CD4-positive, alpha-beta T cell (primary cell): ENCODE measurements at regions of chr11 and their contacts with region 1.

Region 1: DNA sequence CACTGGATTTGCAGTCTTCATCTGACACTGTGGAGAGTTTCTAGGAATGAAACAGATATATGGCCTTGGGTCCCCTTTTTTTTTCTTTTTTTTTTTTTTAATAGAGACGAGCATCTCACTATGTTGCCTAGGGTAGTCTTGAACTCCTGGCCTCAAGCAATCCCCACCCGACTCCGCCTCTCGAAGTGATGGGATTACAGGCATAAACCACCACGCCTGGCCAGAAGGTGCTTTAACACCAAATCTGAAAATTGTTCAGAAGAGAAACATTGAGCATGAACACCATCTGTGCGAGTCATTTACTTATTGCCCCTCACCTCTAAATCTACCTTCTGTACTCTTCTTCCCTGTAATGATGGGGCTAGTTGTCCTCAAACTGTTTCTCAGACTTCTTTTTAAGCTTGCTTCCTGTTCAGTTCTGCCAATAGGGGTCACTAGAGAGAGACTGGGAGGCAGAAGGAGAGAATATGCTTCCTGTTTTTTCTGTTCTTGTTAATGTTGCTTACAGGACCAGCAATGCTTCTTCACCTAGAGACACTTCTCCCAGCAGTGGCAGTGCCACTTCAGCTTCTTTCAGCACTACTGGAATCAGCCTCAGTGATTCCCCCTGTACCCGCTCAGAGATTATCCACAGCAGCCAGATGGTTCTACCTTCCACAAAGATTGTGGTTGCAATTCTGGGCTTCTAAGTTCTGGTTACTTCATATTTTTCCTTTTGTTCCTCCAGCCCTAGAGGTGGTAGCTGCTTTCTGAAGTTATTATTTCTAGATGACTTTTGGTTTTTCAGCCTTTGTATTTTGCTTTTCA is 20.8 kb upstream of the ZBED5 start:
- DNase-seq: peak in 4 of 14 experiments; percentile 44 to 83 (median 78)
- ATAC-seq: peak; percentile 87
- H3K4me3 ChIP-seq: no peak overlapping the region
- H3K4me3 Mint-ChIP-seq: no peak overlapping the region
- H3K27ac ChIP-seq: no peak overlapping the region
- H3K27ac Mint-ChIP-seq: no peak overlapping the region
- H3K4me1 ChIP-seq: peaks cover 7% of the 10 kb centered on the region
- H3K4me1 Mint-ChIP-seq: peaks cover 10% of the 10 kb centered on the region
- H3K27me3 ChIP-seq: no peaks in the 10 kb centered on the region
- H3K27me3 Mint-ChIP-seq: no peaks in the 10 kb centered on the region
- CTCF ChIP-seq: peak; percentile 77

Region 2: DNA sequence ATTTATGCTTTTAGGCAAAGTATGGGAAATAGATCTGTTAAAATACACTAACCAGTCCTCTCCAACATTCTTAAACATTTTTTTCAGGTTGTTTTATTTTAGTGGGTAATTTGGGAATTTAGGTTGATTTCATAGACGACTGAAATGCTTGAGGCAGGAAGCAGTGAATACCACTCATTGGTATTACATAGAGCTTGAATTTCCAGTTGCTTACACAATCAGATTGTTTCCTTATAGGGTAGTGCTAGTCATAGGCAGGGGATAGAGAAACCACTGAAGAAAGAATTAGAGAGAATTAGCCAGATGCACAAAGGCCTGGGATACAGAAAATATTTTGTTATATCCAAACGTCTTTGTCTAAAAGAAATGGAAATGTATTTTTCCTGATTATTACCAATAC is 286.3 kb before region 1 on chr11:
- CTCF ChIA-PET with region 1: no interaction called
- POLR2A ChIA-PET with region 1: no interaction called
- intact Hi-C with region 1: no loop called
- DNase-seq: peak in 2 of 14 experiments; percentile 19 to 26
- ATAC-seq: no peak
- H3K4me3 ChIP-seq: no peak overlapping the region
- H3K4me3 Mint-ChIP-seq: no peak overlapping the region
- H3K27ac ChIP-seq: no peak overlapping the region
- H3K27ac Mint-ChIP-seq: no peak overlapping the region
- H3K4me1 ChIP-seq: no peaks in the 10 kb centered on the region
- H3K4me1 Mint-ChIP-seq: no peaks in the 10 kb centered on the region
- H3K27me3 ChIP-seq: no peaks in the 10 kb centered on the region
- H3K27me3 Mint-ChIP-seq: peaks cover 5% of the 10 kb centered on the region
- CTCF ChIP-seq: no peak

Region 3: DNA sequence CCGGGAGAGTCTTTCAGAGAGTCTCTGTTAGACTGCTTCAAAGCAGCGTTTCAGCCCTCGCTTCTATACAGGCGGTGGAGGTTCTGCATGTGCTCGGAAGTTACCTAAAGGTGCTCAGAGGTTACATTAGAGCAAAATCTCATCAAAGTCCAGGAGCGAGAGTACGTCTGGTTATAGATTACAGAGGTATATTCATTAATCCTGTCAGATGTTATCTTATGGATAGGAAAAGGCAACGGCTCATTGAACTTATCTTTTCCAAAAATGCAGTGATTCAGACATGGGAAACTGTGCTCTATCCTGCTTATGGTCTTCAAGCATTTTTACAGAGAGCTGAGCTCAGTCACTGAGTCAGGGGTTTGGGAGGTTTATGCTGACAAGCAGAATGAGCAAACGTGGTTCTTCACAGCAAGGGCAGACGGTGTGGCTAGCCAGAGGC is 11.7 kb before region 1 on chr11:
- CTCF ChIA-PET with region 1: interaction called, 11 read pairs
- POLR2A ChIA-PET with region 1: no interaction called
- intact Hi-C with region 1: no loop called
- DNase-seq: no peak
- ATAC-seq: no peak
- H3K4me3 ChIP-seq: no peak overlapping the region
- H3K4me3 Mint-ChIP-seq: no peak overlapping the region
- H3K27ac ChIP-seq: no peak overlapping the region
- H3K27ac Mint-ChIP-seq: no peak overlapping the region
- H3K4me1 ChIP-seq: no peaks in the 10 kb centered on the region
- H3K4me1 Mint-ChIP-seq: peaks cover 19% of the 10 kb centered on the region
- H3K27me3 ChIP-seq: no peaks in the 10 kb centered on the region
- H3K27me3 Mint-ChIP-seq: no peaks in the 10 kb centered on the region
- CTCF ChIP-seq: no peak

Region 4: GRCh38 chr11:11022125-11022730 is 143.6 kb after region 1 on chr11:
- CTCF ChIA-PET with region 1: no interaction called
- POLR2A ChIA-PET with region 1: no interaction called
- intact Hi-C with region 1: loop called in 1 of 2 experiments (anchors 2 kb)
- DNase-seq: peak in 4 of 14 experiments; percentile 41 to 61 (median 52)
- ATAC-seq: peak; percentile 49
- H3K4me3 ChIP-seq: no peak overlapping the region
- H3K4me3 Mint-ChIP-seq: no peak overlapping the region
- H3K27ac ChIP-seq: no peak overlapping the region
- H3K27ac Mint-ChIP-seq: no peak overlapping the region
- H3K4me1 ChIP-seq: no peaks in the 10 kb centered on the region
- H3K4me1 Mint-ChIP-seq: no peaks in the 10 kb centered on the region
- H3K27me3 ChIP-seq: no peaks in the 10 kb centered on the region
- H3K27me3 Mint-ChIP-seq: no peaks in the 10 kb centered on the region
- CTCF ChIP-seq: peak; percentile 66

Region 5: GRCh38 chr11:12361682-12362081 is 1483.1 kb after region 1 on chr11:
- CTCF ChIA-PET with region 1: no interaction called
- POLR2A ChIA-PET with region 1: no interaction called
- intact Hi-C with region 1: loop called in 1 of 2 experiments (anchors 5 kb)
- DNase-seq: no peak
- ATAC-seq: no peak
- H3K4me3 ChIP-seq: no peak overlapping the region
- H3K4me3 Mint-ChIP-seq: no peak overlapping the region
- H3K27ac ChIP-seq: no peak overlapping the region
- H3K27ac Mint-ChIP-seq: peak overlapping the region; percentile 69
- H3K4me1 ChIP-seq: peaks cover 59% of the 10 kb centered on the region
- H3K4me1 Mint-ChIP-seq: peaks cover 82% of the 10 kb centered on the region
- H3K27me3 ChIP-seq: no peaks in the 10 kb centered on the region
- H3K27me3 Mint-ChIP-seq: no peaks in the 10 kb centered on the region
- CTCF ChIP-seq: no peak